Heart left ventricle (tissue), 16 donors: ENCODE measurements at regions of chr2 and their contacts with region 1.

Region 1: GRCh38 chr2:54330162-54330925 is 74.3 kb upstream of the TSPYL6 start:
- DNase-seq: peak; percentile 97 to 99 (median 98)
- ATAC-seq: peak; percentile 97 to 99 (median 98)
- H3K4me3 ChIP-seq: peak overlapping the region; percentile 34 to 70 (median 59)
- H3K27ac ChIP-seq: peak overlapping the region; percentile 87 to 96 (median 92)
- H3K4me1 ChIP-seq: peaks cover 3 to 29% (median 13%) of the 10 kb centered on the region in 12 donors
- H3K27me3 ChIP-seq: no peaks in the 10 kb centered on the region
- CTCF ChIP-seq: no peak
- POLR2A ChIP-seq: peak; percentile 78 to 93

Region 2: GRCh38 chr2:54228945-54229344 is 101.4 kb before region 1 on chr2:
- intact Hi-C with region 1: loop called in 2 of 10 experiments (anchors 5 to 10 kb)
- DNase-seq: peak in 1 of 5 donors; percentile 37
- ATAC-seq: no peak
- H3K4me3 ChIP-seq: no peak overlapping the region
- H3K27ac ChIP-seq: no peak overlapping the region
- H3K4me1 ChIP-seq: peaks cover 0 to 50% (median 24%) of the 10 kb centered on the region in 12 donors
- H3K27me3 ChIP-seq: no peaks in the 10 kb centered on the region
- CTCF ChIP-seq: no peak
- POLR2A ChIP-seq: no peak

Region 3: DNA sequence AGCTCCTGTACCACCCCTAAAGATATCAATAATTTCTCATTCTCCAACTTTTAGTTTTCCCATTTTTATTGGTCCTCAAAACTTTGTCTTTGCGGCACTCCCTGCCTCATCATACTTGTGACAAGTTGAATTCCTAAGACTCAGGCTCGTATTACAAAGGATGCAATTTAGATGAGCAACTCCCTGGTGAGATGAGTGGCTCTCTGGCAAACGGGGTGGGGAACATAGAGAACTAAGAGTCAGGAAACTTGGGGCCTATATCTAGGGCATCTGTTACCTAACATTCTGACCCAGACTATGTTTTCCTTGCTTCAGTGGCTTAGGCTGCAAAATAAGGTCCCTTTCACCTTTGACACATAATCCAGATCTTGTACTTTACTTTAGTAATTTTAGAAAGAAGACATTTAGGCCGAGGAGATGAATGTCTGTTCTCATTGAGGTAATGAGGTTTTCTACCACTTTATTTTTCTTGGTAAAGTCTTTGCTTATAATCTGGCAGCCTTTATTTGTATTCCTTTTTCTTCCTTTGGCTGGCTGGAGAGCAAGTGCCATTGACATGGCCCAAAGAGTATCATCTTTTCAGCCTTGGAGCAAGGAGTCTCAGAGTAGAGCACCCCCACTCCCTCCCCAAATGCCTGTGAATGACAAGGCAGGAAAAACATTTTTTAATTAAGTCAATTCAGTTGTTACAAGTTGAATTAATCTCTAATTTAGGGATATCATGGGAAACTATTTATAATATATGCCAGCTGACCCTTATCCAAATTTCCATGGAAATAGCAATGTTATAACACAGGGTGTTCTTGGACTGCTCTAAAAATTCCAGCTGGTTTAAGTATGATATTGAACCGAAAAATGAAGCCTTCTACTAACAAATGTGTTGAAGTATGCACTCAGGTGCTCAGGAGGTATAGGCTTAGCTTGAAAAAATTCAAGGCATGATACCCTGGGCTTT is 89.6 kb before region 1 on chr2:
- intact Hi-C with region 1: no loop called
- DNase-seq: peak in 2 of 5 donors; percentile 43 to 53
- ATAC-seq: peak; percentile 72 to 89 (median 82)
- H3K4me3 ChIP-seq: no peak overlapping the region
- H3K27ac ChIP-seq: peak overlapping the region in 11 of 12 donors; percentile 0 to 69 (median 51)
- H3K4me1 ChIP-seq: peaks cover 0 to 34% (median 11%) of the 10 kb centered on the region in 12 donors
- H3K27me3 ChIP-seq: no peaks in the 10 kb centered on the region
- CTCF ChIP-seq: no peak
- POLR2A ChIP-seq: no peak

Region 4: DNA sequence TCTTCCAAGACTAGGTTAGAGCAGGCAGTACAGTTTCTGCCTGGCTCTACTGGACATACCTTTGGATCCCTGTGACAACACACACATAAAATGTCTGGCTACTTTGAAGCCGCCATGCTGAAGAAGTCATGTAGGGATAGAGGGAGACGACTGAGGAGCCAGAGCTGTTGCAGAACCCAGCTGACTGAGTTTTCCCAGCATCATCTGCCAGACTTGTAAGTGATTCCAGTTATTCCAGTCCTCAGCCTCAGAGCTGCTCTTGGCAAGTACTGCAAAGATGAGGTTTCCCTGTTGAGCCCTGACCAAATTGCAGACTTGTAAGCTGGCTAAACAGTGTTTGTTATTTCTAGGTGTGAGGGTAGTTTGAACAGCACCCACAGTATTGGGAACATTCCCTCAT is 42.8 kb before region 1 on chr2:
- intact Hi-C with region 1: no loop called
- DNase-seq: peak in 3 of 5 donors; percentile 30 to 48 (median 40)
- ATAC-seq: peak; percentile 69 to 93 (median 81)
- H3K4me3 ChIP-seq: no peak overlapping the region
- H3K27ac ChIP-seq: peak overlapping the region in 5 of 12 donors; percentile 1 to 62 (median 32)
- H3K4me1 ChIP-seq: peaks cover 0 to 26% (median 1%) of the 10 kb centered on the region in 12 donors
- H3K27me3 ChIP-seq: no peaks in the 10 kb centered on the region
- CTCF ChIP-seq: no peak
- POLR2A ChIP-seq: no peak

Region 5: GRCh38 chr2:54512663-54513362 is 182.5 kb after region 1 on chr2:
- intact Hi-C with region 1: loop called in 1 of 10 experiments (anchors 10 kb)
- DNase-seq: no peak
- ATAC-seq: peak in 2 of 4 donors; percentile 5 to 12
- H3K4me3 ChIP-seq: no peak overlapping the region
- H3K27ac ChIP-seq: peak overlapping the region in 2 of 12 donors; percentile 11 to 12
- H3K4me1 ChIP-seq: peaks cover 22 to 99% (median 80%) of the 10 kb centered on the region in 12 donors
- H3K27me3 ChIP-seq: no peaks in the 10 kb centered on the region
- CTCF ChIP-seq: no peak
- POLR2A ChIP-seq: no peak